ENCODE measurements at regions of chr11 and their contacts with region 1.

Region 1: GRCh38 chr11:12411806-12412727 is 34.7 kb downstream of the PARVA start:
- DNase-seq: peak; percentile 87

Region 2: GRCh38 chr11:12377824-12378593 is 34.1 kb before region 1 on chr11:
- intact Hi-C with region 1: loop called in 1 of 2 experiments (anchors 5 kb)
- DNase-seq: peak; percentile 94

Region 3: DNA sequence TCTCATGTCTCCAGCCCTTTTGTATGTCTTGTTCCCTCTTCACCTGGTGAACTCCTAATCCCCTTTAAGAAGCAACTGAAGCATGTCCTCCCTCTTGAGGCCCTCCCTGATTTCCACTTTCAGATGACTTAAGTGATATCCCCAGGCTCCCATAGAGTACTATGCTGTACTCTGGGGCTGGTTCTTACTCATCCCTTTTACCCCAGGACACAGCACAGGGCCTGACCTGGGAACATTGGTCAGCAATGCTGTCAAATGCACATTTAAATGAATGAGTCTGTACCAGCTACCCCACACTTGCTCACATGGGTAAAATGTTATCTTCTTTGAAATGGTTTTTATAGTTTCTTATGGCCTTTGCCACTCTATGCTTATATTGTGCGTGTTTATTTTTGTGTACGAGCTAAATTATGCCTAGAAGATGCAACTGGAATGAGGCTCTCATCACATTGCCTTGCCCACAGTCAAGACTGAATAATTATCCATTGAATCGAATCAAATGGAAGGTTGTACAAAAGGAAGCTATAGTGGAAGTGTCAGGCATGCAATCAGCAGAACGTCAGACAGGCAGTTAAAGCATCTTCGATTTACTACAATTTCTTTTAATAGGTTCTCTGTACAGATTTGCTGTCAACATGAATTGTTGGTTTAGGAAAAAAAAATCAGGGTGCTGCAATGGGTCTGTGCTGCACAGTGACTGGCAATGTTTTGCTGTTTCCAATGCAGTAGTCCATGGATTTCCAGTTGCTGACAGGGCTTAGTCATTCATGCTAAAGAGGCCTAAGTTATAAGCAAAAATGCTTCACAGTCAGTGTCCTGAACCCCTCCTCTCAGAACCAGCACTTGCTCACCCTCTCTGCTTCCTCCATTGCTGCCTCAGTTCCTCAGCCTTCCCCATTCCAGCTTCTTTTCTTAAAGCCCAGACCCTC is 44.8 kb after region 1 on chr11:
- intact Hi-C with region 1: loop called in 1 of 2 experiments (anchors 5 kb)
- DNase-seq: no peak

Region 4: DNA sequence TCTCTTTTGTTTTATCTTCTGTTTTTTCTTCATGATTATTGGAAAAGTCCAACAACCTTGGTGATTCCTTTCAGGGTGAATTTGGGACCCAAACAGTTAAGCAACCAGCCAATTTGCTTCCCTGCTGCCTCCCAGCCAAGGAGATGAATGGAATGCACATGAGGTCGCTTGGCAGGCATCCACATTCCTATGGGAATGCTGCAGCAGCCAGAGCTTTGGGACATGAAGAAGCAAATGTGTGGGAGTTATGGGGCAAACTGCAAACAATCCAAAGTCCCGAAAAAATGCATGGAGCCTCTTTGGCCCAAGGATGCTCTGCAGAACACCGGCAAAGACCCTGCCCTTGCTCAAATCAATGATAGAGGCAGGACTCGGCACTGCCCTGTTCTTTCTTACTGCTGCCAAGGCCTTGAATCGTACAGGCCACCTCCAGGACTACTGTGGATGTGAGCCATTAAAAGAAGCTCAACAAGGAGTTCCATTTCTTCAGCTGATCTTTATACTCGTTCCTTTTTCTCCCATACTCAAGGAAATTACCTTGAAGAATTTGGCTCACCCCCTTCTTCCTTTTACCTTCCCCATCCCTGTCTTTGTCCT is 144.8 kb after region 1 on chr11:
- intact Hi-C with region 1: no loop called
- DNase-seq: peak; percentile 84

Region 5: GRCh38 chr11:12706545-12707499 is 294.8 kb after region 1 on chr11:
- intact Hi-C with region 1: no loop called
- DNase-seq: no peak